ENCODE measurements at regions of chr11 and their contacts with region 1.

Region 1: DNA sequence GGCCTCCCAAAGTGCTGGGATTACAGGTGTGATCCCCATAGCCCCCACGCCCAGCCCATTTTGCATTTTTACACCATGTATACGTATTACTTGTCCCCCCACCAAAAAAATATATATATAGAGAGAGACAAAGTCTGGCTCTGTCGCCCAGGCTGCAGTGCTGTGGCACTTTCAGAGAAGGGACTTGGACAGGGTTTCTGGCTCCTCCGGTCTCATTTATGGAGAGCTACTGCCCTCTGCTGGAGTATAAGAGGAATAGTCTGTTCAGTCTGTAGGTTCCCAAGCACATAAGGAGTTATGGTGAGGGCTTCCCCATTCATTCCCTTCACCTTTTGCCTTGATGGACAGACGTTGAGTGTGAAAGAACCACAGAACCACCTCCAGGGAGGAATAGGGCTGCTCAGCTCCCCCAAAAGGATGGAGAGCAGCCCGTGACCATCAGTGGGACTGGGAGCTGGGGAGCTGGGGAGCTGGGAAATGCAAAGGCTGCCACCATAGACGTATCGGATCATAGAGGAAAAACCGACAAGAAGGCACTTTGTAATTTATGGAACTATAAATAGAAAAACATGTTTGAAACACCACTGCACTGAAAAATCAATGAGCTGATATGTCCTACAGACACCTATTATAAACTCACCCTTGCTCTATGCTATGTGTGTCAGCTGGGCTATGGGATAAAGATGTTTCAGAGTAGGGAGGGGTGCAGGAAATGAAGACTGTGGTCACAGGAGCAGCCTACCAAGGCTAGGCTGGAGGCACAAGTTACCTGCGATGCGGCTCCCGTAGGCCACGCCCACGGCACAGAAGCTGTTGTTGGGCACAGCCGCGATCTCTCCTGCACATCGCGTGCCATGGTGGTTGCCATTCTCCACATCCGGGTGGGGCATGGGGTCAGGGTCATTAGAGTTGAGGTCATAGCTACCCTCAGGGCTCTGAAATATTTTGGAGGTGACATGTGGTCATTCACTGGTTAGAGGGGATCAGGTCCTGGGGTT is 5.2 kb downstream of the PCSK7 start:
- DNase-seq: peak; percentile 86
- H3K4me3 Mint-ChIP-seq: no peak overlapping the region
- H3K27ac Mint-ChIP-seq: no peak overlapping the region
- H3K4me1 Mint-ChIP-seq: peaks cover 29% of the 10 kb centered on the region
- H3K27me3 Mint-ChIP-seq: no peaks in the 10 kb centered on the region
- CTCF ChIP-seq: peak; percentile 80

Region 2: DNA sequence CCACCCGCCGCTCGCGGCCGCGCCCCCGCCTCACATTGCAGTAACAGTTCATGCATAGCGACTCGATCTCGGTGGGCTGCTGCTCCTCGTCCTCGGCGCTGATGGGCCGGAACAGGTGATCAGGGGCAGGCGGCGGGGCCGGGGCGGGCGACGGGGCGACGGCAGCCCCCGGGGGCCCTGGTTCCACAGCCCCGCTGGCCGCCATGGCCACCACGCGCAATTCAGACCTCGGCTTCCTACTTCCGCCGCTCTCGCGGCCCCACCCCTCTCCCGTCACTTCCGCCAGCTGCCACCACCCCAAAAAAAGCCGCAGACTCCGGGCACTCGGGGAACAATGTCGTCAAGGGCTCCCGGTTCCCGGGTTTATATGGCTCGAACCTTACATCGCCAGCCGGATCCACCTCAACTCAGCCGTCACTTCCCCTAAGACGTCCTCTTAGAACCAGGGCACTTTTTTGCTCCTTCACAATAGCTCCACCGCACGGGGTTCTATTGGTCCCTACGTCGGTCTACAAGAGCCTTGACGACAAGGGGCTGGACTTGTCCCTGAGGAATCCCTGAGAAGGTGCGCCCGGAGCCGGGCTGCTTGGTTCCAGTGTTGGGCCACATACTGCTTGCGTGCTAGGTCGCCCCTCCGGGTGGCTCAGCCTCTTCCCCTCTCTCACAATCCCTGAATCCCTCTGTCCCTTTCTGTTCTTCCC is 438.8 kb before region 1 on chr11 and contains the start of gene ZPR1:
- CTCF ChIA-PET with region 1: interaction called, 3 read pairs
- POLR2A ChIA-PET with region 1: interaction called, 3 read pairs
- intact Hi-C with region 1: loop called (anchors 5 kb)
- DNase-seq: peak; percentile 58
- H3K4me3 Mint-ChIP-seq: peak within 1 kb of the TSS; percentile 92
- H3K27ac Mint-ChIP-seq: peak within 1 kb of the TSS; percentile 99
- H3K4me1 Mint-ChIP-seq: peaks cover 28% of the 10 kb centered on the region
- H3K27me3 Mint-ChIP-seq: no peaks in the 10 kb centered on the region
- CTCF ChIP-seq: no peak
- total RNA-seq, gene ZPR1: 82.5 and 105 TPM in 2 replicates

Region 3: GRCh38 chr11:116948391-116948790 is 278.3 kb before region 1 on chr11:
- CTCF ChIA-PET with region 1: no interaction called
- POLR2A ChIA-PET with region 1: no interaction called
- intact Hi-C with region 1: no loop called
- DNase-seq: peak; percentile 77
- H3K4me3 Mint-ChIP-seq: peak overlapping the region; percentile 22
- H3K27ac Mint-ChIP-seq: peak overlapping the region; percentile 79
- H3K4me1 Mint-ChIP-seq: peaks cover 7% of the 10 kb centered on the region
- H3K27me3 Mint-ChIP-seq: no peaks in the 10 kb centered on the region
- CTCF ChIP-seq: no peak

Region 4: GRCh38 chr11:117170210-117170609 is 56.5 kb before region 1 on chr11:
- CTCF ChIA-PET with region 1: interaction called, 10 read pairs
- POLR2A ChIA-PET with region 1: interaction called, 3 read pairs
- intact Hi-C with region 1: no loop called
- DNase-seq: no peak
- H3K4me3 Mint-ChIP-seq: no peak overlapping the region
- H3K27ac Mint-ChIP-seq: no peak overlapping the region
- H3K4me1 Mint-ChIP-seq: peaks cover 13% of the 10 kb centered on the region
- H3K27me3 Mint-ChIP-seq: no peaks in the 10 kb centered on the region
- CTCF ChIP-seq: no peak

Region 5: DNA sequence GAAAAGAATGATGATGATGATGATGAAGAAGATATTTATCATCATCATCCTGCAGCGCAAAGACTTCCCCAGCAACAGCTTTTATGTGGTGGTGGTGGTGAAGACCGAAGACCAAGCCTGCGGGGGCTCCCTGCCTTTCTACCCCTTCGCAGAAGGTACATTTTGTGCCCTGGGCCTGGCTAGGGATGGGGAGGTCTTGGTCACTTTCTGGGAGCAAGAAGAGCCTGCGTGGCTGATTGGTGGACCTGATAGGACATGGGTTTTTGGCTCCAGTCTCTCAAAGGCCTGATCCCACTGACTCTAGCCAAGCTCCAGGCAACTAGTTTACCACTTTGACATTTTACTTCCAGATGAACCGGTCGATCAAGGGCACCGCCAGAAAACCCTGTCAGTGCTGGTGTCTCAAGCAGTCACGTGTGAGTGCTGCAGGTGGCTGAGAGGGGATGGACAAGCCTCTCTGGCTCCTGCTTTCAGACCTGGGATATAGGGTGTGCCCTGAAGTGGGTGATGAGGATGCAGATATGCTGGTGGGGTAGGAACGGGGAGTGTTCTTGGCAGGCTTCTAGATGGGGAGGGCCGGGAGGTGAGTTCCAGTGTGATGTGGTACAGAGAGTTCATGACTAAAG is 42.9 kb before region 1 on chr11:
- CTCF ChIA-PET with region 1: interaction called, 34 read pairs
- POLR2A ChIA-PET with region 1: interaction called, 23 read pairs
- intact Hi-C with region 1: no loop called
- DNase-seq: no peak
- H3K4me3 Mint-ChIP-seq: no peak overlapping the region
- H3K27ac Mint-ChIP-seq: no peak overlapping the region
- H3K4me1 Mint-ChIP-seq: peaks cover 11% of the 10 kb centered on the region
- H3K27me3 Mint-ChIP-seq: no peaks in the 10 kb centered on the region
- CTCF ChIP-seq: no peak

Region 6: GRCh38 chr11:117210620-117211019 is 16.1 kb before region 1 on chr11:
- CTCF ChIA-PET with region 1: interaction called, 19 read pairs
- POLR2A ChIA-PET with region 1: interaction called, 3 read pairs
- intact Hi-C with region 1: no loop called
- DNase-seq: no peak
- H3K4me3 Mint-ChIP-seq: no peak overlapping the region
- H3K27ac Mint-ChIP-seq: no peak overlapping the region
- H3K4me1 Mint-ChIP-seq: no peaks in the 10 kb centered on the region
- H3K27me3 Mint-ChIP-seq: no peaks in the 10 kb centered on the region
- CTCF ChIP-seq: no peak

Region 7: DNA sequence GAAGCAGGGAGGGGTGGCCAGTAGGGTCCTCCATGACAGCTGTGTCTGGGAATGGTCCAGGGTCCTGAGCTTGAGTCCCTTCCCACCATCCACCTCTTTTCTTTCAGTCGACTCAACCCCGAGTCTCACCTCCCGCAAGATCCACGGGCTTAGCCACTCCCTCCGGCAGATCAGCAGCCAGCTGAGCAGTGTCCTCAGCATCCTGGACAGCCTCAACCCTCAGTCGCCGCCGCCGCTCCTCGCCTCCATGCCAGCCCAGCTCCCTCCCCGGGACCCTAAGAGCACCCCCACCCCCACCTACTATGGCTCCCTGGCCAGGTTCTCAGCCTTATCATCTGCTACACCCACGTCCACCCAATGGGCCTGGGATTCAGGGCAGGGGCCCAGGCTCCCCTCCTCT is 182.8 kb after region 1 on chr11:
- CTCF ChIA-PET with region 1: no interaction called
- POLR2A ChIA-PET with region 1: no interaction called
- intact Hi-C with region 1: no loop called
- DNase-seq: no peak
- H3K4me3 Mint-ChIP-seq: no peak overlapping the region
- H3K27ac Mint-ChIP-seq: no peak overlapping the region
- H3K4me1 Mint-ChIP-seq: no peaks in the 10 kb centered on the region
- H3K27me3 Mint-ChIP-seq: no peaks in the 10 kb centered on the region
- CTCF ChIP-seq: no peak